ENCODE measurements at regions of chr13 and their contacts with region 1.

Region 1: GRCh38 chr13:51125498-51126226 is 14.6 kb upstream of the C13orf42 start:
- DNase-seq: peak; percentile 54
- CTCF ChIP-seq: peak; percentile 78

Region 2: DNA sequence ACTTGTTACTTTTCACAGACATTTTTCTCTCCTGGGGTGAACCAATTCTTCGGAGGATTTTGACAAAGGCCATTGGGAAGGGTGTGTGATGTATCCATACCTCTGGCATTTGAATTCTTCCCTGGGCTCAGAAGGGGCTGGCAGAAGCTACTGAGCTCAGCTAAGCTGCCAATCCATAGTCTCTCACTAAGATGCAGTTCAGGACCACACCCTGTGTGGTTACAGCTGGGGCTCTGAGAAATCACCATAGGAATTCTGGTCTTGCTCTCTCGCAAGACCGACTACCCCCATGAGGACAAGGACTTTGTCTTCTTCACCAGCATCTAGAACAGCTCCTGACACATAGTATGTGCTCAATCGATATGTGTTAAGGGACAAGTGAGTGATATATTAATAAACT is 20.6 kb before region 1 on chr13:
- CTCF ChIA-PET with region 1: interaction called, 20 read pairs
- POLR2A ChIA-PET with region 1: no interaction called
- DNase-seq: no peak
- CTCF ChIP-seq: no peak

Region 3: DNA sequence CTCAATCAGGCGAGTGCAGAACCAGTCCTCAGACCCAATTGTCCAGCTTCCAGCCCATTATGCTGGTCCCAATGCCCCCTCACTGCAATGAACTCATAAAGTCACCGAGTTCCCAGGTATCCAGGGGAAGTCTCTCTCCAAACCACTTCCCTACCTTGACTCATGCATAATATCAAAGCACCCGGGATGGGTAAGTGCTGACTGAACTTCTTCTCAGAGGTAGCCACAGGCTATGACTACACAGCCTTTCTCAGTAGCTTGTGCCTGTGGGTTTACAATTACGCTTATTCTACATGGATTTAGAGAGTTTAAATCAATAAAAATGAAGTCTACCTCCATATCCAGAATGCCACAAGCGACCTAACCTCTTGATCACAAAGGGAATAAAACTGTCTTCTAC is 12.9 kb before region 1 on chr13:
- CTCF ChIA-PET with region 1: interaction called, 27 read pairs
- POLR2A ChIA-PET with region 1: no interaction called
- DNase-seq: no peak
- CTCF ChIP-seq: no peak

Region 4: DNA sequence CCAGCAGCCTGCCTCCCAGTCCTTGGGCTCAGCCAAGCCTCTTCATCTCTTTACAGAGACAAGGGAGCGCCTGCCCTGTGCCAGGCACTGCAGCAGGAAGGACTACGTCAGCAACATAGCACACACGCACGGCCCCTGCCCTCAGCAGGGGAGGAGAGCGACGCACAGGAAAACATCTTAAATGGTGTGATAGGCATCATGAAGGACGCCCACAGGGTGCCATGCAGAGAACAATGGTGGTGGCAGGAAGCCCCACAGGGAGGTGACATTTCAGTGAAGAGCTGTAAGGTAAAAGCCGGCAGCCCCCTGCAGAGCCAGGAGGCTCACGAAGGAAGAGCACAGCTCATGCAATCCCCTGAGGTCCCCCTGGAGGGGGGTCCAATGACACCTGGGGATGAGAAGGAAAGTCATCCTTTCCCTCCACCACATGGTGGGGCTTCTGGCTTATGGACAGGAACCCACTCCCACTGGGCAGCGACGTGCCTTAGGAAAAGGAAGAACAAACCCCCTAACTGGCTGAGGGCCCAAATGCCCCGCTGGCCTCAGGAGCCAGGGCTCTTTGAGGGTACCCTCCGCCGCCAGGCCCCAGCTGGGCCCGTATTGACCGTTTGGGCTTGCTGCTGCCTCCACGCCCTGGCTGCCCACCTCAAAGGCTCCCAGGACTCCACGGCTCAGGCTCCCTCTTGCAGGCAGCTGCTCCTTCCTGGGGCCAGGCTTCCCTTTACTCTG is 22.7 kb after region 1 on chr13:
- CTCF ChIA-PET with region 1: interaction called, 32 read pairs
- POLR2A ChIA-PET with region 1: no interaction called
- DNase-seq: no peak
- CTCF ChIP-seq: no peak

Region 5: GRCh38 chr13:51832471-51833152 is 707.0 kb after region 1 on chr13:
- CTCF ChIA-PET with region 1: interaction called, 10 read pairs
- POLR2A ChIA-PET with region 1: no interaction called
- DNase-seq: peak; percentile 56
- CTCF ChIP-seq: peak; percentile 38

Measured in GM10248 (cell line).